Activated CD4-positive, alpha-beta T cell treated with anti-CD3 and anti-CD28 coated beads, Interleukin-2, amount 10 ng/mL, durations not matched to agents 24 days and 14 days (primary cell): ENCODE measurements at regions of chr12 and their contacts with region 1.

Region 1: DNA sequence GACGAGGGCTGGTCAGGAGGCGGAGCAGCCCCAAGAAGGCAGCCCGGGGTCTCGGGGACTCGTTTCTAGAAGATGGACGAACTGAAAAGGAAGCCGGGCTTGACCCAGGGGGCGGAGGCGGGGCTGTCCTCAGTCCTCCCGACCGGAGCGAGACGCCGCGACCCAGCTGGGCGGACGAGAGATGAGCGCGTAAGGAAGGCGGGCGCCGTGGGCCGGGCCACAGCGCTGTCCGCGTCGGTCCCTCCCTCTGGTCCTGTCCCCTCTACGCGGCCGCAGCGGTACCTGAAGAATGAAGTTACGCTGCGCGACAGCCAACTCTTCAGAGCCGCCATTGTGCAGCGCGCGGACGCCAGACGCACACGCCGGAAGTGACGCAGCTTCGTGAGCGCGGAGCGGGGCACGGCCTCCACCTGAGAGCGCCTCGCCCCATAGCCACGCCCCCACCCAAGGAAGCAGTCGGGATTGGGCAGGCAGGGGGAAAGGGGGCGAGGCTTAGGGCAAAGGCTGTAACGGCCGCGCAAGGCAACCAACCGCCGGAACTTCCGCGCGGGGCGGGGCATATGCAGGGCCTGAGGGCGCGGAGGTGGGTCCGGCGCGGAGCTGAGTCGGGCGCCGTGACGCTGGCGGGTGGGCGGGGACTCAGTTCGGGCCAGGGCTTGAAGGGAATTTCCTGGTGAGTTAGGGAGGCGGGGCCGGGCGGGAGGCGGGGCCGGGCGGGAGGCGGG is at the start of gene DIABLO:
- DNase-seq: peak; percentile 100
- H3K4me3 Mint-ChIP-seq: peak within 1 kb of the TSS; percentile 95
- H3K27ac Mint-ChIP-seq: peak within 1 kb of the TSS; percentile 94
- H3K4me1 Mint-ChIP-seq: peaks cover 31% of the 10 kb centered on the region
- H3K27me3 Mint-ChIP-seq: no peaks in the 10 kb centered on the region
- total RNA-seq, gene DIABLO: 59.4 and 61.0 TPM in 2 replicates

Region 2: DNA sequence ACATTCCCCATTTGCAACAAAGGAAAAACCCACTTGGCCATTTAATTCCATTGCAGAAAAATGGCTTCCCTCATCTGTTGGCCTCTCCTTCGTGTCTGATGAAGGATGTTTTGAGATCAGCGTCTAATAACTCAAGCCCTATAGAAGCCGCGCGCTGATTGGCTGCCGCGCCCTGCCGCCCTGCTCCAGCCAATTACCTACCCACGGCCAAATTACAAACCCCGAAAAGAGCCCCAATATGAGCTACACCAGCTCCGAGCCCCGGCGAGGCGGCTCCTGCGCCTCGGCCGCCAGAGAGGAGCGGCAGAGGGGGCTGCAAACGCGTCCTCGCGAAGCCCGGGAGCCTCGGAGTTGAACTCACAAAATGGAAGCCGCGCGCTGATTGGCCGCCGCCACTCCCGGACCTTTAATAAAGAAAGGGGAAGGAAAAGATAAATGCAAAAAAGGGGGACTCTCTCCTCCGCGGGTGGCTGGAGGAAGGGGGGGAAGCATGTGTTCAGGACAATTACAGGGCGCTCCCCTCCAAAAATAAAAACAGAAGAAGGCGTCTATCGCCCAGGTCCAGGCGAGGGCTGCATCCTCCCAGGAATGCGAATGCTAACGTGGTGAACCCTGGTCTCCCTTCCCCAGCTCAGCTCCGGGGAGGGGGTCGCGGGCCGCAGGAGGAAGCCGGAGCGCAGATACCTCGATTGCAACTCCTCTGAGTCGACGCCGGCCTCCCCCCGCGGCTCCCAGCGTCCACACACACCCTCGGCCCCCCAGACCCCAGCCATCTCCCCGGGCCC is 422.8 kb before region 1 on chr12:
- intact Hi-C with region 1: loop called (anchors 5 kb)
- DNase-seq: peak; percentile 96
- H3K4me3 Mint-ChIP-seq: peak overlapping the region; percentile 100
- H3K27ac Mint-ChIP-seq: peak overlapping the region; percentile 100
- H3K4me1 Mint-ChIP-seq: peaks cover 34% of the 10 kb centered on the region
- H3K27me3 Mint-ChIP-seq: no peaks in the 10 kb centered on the region

Region 3: DNA sequence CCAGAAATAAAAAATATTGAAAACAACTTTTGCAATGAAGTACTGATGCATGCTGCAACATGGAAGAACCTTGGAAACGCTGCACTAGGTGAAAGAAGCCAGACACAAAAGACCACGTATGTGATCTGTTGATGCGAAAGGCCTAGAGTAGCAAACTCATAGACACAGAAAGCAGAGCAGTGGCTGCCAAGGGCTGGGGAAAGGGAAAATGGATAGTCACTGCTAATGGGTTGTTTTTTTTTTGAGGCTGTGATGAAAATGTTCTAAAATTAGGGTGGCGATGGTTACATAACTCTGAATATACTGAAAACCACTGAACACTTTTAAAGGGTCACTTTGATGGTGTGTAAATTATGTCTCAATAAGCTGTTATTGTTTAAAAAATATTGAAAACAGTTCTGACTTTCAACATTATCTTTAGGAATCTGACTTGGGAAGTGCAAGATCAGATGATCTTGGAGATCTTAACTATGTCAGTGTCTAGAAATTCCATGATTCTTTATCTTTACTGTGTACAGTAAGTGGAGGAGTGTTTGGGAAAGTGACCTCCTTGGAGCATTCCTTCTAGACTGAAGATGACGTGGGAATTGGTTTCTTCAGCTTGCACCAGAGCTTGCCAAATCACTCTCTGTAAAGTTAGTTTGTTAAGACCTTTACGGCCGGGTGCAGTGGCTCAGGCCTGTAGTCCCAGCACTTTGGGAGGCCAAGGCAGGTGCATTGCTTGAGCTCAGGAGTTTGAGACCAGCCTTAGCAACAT is 134.9 kb before region 1 on chr12:
- intact Hi-C with region 1: no loop called
- DNase-seq: no peak
- H3K4me3 Mint-ChIP-seq: no peak overlapping the region
- H3K27ac Mint-ChIP-seq: no peak overlapping the region
- H3K4me1 Mint-ChIP-seq: peaks cover 30% of the 10 kb centered on the region
- H3K27me3 Mint-ChIP-seq: no peaks in the 10 kb centered on the region

Region 4: GRCh38 chr12:122244565-122245371 is 18.9 kb after region 1 on chr12:
- intact Hi-C with region 1: loop called (anchors 2 kb)
- DNase-seq: peak; percentile 70
- H3K4me3 Mint-ChIP-seq: peak overlapping the region; percentile 79
- H3K27ac Mint-ChIP-seq: peak overlapping the region; percentile 83
- H3K4me1 Mint-ChIP-seq: peaks cover 18% of the 10 kb centered on the region
- H3K27me3 Mint-ChIP-seq: no peaks in the 10 kb centered on the region